Esophagus muscularis mucosa (tissue), 4 donors: ENCODE measurements at regions of chr3 and their contacts with region 1.

Region 1: GRCh38 chr3:105686278-105686897 is 182.4 kb downstream of the CBLB start:
- DNase-seq: no peak
- H3K4me3 ChIP-seq: no peak overlapping the region
- H3K27ac ChIP-seq: no peak overlapping the region
- H3K4me1 ChIP-seq: peaks cover 0 to 6% (median 3%) of the 10 kb centered on the region in 4 donors
- H3K27me3 ChIP-seq: no peaks in the 10 kb centered on the region
- CTCF ChIP-seq: peak; percentile 61 to 79 (median 73)
- EP300 ChIP-seq: no peak
- POLR2A ChIP-seq: no peak

Region 2: DNA sequence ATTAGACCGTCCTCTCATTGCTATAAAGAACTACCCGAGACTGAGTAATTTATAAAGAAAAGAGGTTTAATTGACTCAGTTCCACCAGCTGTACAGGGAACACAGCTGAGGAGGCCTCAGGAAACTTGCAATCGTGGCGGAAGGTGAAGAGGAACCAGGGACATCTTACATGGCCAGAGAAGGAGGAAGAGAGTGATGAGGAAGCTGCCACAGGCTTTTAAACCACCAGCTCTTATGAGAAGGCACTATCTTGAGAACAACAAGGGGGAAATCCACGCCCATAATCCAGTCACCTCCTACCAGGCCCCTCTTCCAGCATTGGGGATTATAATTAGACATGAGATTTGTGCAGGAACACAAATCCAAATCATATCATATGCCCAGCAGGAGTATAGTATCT is 181.2 kb before region 1 on chr3:
- intact Hi-C with region 1: no loop called
- DNase-seq: no peak
- H3K4me3 ChIP-seq: no peak overlapping the region
- H3K27ac ChIP-seq: no peak overlapping the region
- H3K4me1 ChIP-seq: no peaks in the 10 kb centered on the region
- H3K27me3 ChIP-seq: no peaks in the 10 kb centered on the region
- CTCF ChIP-seq: no peak
- EP300 ChIP-seq: no peak
- POLR2A ChIP-seq: no peak

Region 3: GRCh38 chr3:106609666-106610301 is 923.4 kb after region 1 on chr3:
- intact Hi-C with region 1: loop called (anchors 5 kb)
- DNase-seq: no peak
- H3K4me3 ChIP-seq: no peak overlapping the region
- H3K27ac ChIP-seq: no peak overlapping the region
- H3K4me1 ChIP-seq: peaks cover 0 to 7% (median 3%) of the 10 kb centered on the region in 4 donors
- H3K27me3 ChIP-seq: no peaks in the 10 kb centered on the region
- CTCF ChIP-seq: peak; percentile 80 to 93 (median 81)
- EP300 ChIP-seq: no peak
- POLR2A ChIP-seq: no peak

Region 4: DNA sequence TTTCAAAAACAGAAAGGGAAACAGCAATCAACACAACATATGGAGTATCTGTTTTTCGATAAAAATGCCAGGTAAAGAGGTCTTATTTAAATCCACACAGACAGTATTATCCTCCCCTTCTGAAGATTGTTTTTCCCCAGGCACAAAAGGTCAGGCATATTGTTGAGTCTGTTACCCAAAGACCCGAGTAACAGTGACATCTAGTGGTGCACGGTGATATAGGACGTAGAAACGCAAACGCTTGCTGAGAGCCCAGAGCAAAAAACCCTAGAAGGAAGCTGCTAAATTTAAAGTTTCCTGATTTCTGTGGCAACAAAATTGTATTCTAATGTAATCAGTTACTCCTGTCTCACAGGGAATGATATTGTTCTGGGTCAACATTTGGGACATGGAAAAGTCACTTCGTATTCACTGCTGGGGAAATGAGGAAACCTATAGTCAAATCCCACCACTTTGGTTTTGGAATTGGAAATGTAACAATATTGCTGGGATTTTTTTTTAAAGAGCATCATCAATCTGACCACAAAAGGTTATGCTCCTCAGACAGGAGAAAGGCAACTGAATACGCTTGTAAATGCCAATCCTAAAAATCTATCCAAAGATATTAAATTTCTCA is 1378.2 kb after region 1 on chr3:
- intact Hi-C with region 1: loop called (anchors 10 kb)
- DNase-seq: no peak
- H3K4me3 ChIP-seq: no peak overlapping the region
- H3K27ac ChIP-seq: no peak overlapping the region
- H3K4me1 ChIP-seq: peaks cover 11 to 27% (median 15%) of the 10 kb centered on the region in 4 donors
- H3K27me3 ChIP-seq: no peaks in the 10 kb centered on the region
- CTCF ChIP-seq: peak; percentile 71 to 86 (median 73)
- EP300 ChIP-seq: no peak
- POLR2A ChIP-seq: no peak